ENCODE measurements at regions of chr1 and their contacts with region 1.

Region 1: GRCh38 chr1:86833461-86834215 is 80.3 kb downstream of the SELENOF start:
- DNase-seq: peak; percentile 9 to 69 (median 60)
- ATAC-seq: peak; percentile 84
- H3K4me3 ChIP-seq: no peak overlapping the region
- H3K4me3 Mint-ChIP-seq: no peak overlapping the region
- H3K27ac ChIP-seq: no peak overlapping the region
- H3K27ac Mint-ChIP-seq: no peak overlapping the region
- H3K4me1 ChIP-seq: no peaks in the 10 kb centered on the region
- H3K4me1 Mint-ChIP-seq: peaks cover 0 to 7% (median 0%) of the 10 kb centered on the region in 7 donors
- H3K27me3 ChIP-seq: no peaks in the 10 kb centered on the region
- H3K27me3 Mint-ChIP-seq: peaks cover 0 to 7% (median 0%) of the 10 kb centered on the region in 5 donors

Region 2: GRCh38 chr1:86965012-86965826 is 131.6 kb after region 1 on chr1:
- CTCF ChIA-PET with region 1: interaction called, 3 read pairs
- POLR2A ChIA-PET with region 1: no interaction called
- intact Hi-C with region 1: loop called (anchors 1 kb)
- DNase-seq: peak in 6 of 9 donors; percentile 1 to 31 (median 15)
- ATAC-seq: peak; percentile 48
- H3K4me3 ChIP-seq: no peak overlapping the region
- H3K4me3 Mint-ChIP-seq: peak overlapping the region in 1 of 10 donors; percentile 36
- H3K27ac ChIP-seq: no peak overlapping the region
- H3K27ac Mint-ChIP-seq: peak overlapping the region in 3 of 9 donors; percentile 56 to 69 (median 59)
- H3K4me1 ChIP-seq: no peaks in the 10 kb centered on the region
- H3K4me1 Mint-ChIP-seq: peaks cover 0 to 5% (median 0%) of the 10 kb centered on the region in 7 donors
- H3K27me3 ChIP-seq: no peaks in the 10 kb centered on the region
- H3K27me3 Mint-ChIP-seq: no peaks in the 10 kb centered on the region

Region 3: DNA sequence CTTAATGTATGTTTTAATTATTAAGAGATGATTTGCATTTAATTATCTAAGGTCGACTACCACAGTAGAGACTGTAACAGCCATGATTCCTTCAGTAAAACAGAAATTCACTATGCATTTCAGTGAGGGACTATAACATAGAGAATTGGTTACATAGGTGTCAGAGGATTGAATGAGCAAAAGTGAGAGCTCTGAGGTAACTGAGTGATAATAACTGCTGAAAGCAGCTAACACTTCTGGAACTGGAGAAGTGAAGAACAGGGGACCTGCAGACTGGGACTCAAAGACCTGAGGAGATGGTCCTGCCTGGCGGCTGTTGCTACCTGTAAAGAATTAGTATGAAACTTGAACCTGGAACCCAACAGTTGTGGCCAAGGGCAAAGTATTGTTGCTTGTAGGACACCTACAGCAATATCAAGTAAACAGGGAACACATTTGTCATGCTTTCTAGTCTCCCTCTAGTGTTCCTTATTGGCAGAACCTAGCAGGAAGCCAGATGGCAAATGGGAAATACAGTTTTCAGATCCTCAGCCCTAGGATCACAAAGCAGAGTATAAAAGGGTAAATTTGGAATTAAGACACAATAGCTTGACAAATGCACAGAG is 191.4 kb after region 1 on chr1:
- CTCF ChIA-PET with region 1: no interaction called
- POLR2A ChIA-PET with region 1: no interaction called
- intact Hi-C with region 1: loop called (anchors 1 to 5 kb)
- DNase-seq: no peak
- ATAC-seq: peak; percentile 42
- H3K4me3 ChIP-seq: no peak overlapping the region
- H3K4me3 Mint-ChIP-seq: no peak overlapping the region
- H3K27ac ChIP-seq: no peak overlapping the region
- H3K27ac Mint-ChIP-seq: peak overlapping the region in 1 of 9 donors; percentile 11
- H3K4me1 ChIP-seq: no peaks in the 10 kb centered on the region
- H3K4me1 Mint-ChIP-seq: peaks cover 2 to 17% (median 8%) of the 10 kb centered on the region in 7 donors
- H3K27me3 ChIP-seq: no peaks in the 10 kb centered on the region
- H3K27me3 Mint-ChIP-seq: no peaks in the 10 kb centered on the region

Region 4: GRCh38 chr1:87151500-87152421 is 318.1 kb after region 1 on chr1:
- CTCF ChIA-PET with region 1: no interaction called
- POLR2A ChIA-PET with region 1: no interaction called
- intact Hi-C with region 1: no loop called
- DNase-seq: peak in 5 of 9 donors; percentile 1 to 53 (median 14)
- ATAC-seq: peak; percentile 71
- H3K4me3 ChIP-seq: peak overlapping the region; percentile 45
- H3K4me3 Mint-ChIP-seq: peak overlapping the region; percentile 80 to 94 (median 84)
- H3K27ac ChIP-seq: no peak overlapping the region
- H3K27ac Mint-ChIP-seq: peak overlapping the region in 5 of 9 donors; percentile 4 to 32 (median 7)
- H3K4me1 ChIP-seq: no peaks in the 10 kb centered on the region
- H3K4me1 Mint-ChIP-seq: peaks cover 8 to 13% (median 11%) of the 10 kb centered on the region in 7 donors
- H3K27me3 ChIP-seq: peaks cover 0 to 7% of the 10 kb centered on the region in 2 donors
- H3K27me3 Mint-ChIP-seq: peaks cover 40 to 67% (median 46%) of the 10 kb centered on the region in 5 donors

Region 5: DNA sequence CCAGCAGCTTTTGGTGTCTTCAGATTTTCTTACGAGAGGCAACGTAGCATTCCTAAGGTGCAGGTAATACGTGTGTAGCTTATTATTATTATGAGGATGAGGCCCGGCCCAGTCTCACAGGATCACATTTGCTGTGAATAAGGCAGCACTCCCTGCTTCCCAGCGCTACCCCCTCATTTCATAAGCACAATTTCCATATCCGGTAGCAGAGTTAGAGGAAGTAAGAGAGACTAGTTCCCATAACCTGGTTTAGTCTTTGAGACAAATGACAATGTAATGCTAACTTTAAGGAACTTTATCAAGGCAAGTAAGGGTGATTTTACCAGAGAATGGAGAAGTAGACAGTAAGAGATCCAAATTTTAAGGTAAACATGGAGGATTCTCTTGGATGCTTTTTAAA is 480.5 kb after region 1 on chr1:
- CTCF ChIA-PET with region 1: no interaction called
- POLR2A ChIA-PET with region 1: no interaction called
- intact Hi-C with region 1: no loop called
- DNase-seq: no peak
- ATAC-seq: peak; percentile 47
- H3K4me3 ChIP-seq: no peak overlapping the region
- H3K4me3 Mint-ChIP-seq: no peak overlapping the region
- H3K27ac ChIP-seq: no peak overlapping the region
- H3K27ac Mint-ChIP-seq: no peak overlapping the region
- H3K4me1 ChIP-seq: no peaks in the 10 kb centered on the region
- H3K4me1 Mint-ChIP-seq: peaks cover 0 to 10% (median 0%) of the 10 kb centered on the region in 7 donors
- H3K27me3 ChIP-seq: no peaks in the 10 kb centered on the region
- H3K27me3 Mint-ChIP-seq: peaks cover 9 to 19% (median 14%) of the 10 kb centered on the region in 5 donors